Transverse colon (tissue), 4 donors: ENCODE measurements at regions of chr20 and their contacts with region 1.

Region 1: DNA sequence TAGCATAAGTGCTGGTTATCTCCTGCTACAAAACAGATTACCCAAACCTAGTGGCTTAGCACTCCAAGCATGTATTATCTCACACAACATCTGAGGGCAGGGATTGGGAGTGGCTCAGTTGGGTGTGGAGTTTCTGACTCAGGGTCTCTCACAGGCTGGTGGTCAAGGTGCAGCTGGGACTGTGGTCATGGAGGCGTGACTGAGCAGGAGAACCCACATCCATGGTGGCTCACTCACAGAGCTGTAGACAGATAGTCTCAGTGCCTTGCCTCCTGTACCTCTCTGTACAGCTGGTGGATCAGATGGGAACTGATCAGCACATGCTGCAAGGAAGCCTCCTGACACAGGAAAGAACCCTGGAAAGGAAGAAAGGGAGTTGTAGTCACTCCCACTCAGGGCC is 83.1 kb upstream of the CST7 start:
- DNase-seq: no peak
- H3K4me3 ChIP-seq: no peak overlapping the region
- H3K27ac ChIP-seq: no peak overlapping the region
- H3K4me1 ChIP-seq: no peaks in the 10 kb centered on the region
- H3K27me3 ChIP-seq: no peaks in the 10 kb centered on the region
- CTCF ChIP-seq: no peak
- EP300 ChIP-seq: no peak
- POLR2A ChIP-seq: no peak

Region 2: GRCh38 chr20:24754691-24755090 is 111.3 kb before region 1 on chr20:
- in situ Hi-C with region 1: no loop called
- intact Hi-C with region 1: loop called (anchors 5 kb)
- DNase-seq: no peak
- H3K4me3 ChIP-seq: no peak overlapping the region
- H3K27ac ChIP-seq: no peak overlapping the region
- H3K4me1 ChIP-seq: no peaks in the 10 kb centered on the region
- H3K27me3 ChIP-seq: no peaks in the 10 kb centered on the region
- CTCF ChIP-seq: no peak
- EP300 ChIP-seq: no peak
- POLR2A ChIP-seq: no peak

Region 3: GRCh38 chr20:24917797-24918578 is 52.0 kb after region 1 on chr20:
- in situ Hi-C with region 1: no loop called
- intact Hi-C with region 1: no loop called
- DNase-seq: peak; percentile 68
- H3K4me3 ChIP-seq: no peak overlapping the region
- H3K27ac ChIP-seq: no peak overlapping the region
- H3K4me1 ChIP-seq: peaks cover 0 to 10% (median 5%) of the 10 kb centered on the region in 4 donors
- H3K27me3 ChIP-seq: no peaks in the 10 kb centered on the region
- CTCF ChIP-seq: peak; percentile 76 to 87 (median 83)
- EP300 ChIP-seq: no peak
- POLR2A ChIP-seq: no peak